Activated CD4-positive, alpha-beta T cell treated with anti-CD3 and anti-CD28 coated beads, Interleukin-2, amount 10 ng/mL, durations not matched to agents 24 days and 14 days (primary cell): ENCODE measurements at regions of chr11 and their contacts with region 1.

Region 1: GRCh38 chr11:9015677-9016076 is 11.9 kb upstream of the NRIP3 start:
- DNase-seq: peak; percentile 88
- H3K4me3 Mint-ChIP-seq: no peak overlapping the region
- H3K27ac Mint-ChIP-seq: no peak overlapping the region
- H3K4me1 Mint-ChIP-seq: peaks cover 22% of the 10 kb centered on the region
- H3K27me3 Mint-ChIP-seq: peaks cover 17% of the 10 kb centered on the region

Region 2: GRCh38 chr11:9060700-9061111 is 45.0 kb after region 1 on chr11:
- intact Hi-C with region 1: loop called (anchors 5 kb)
- DNase-seq: peak; percentile 84
- H3K4me3 Mint-ChIP-seq: no peak overlapping the region
- H3K27ac Mint-ChIP-seq: peak overlapping the region; percentile 30
- H3K4me1 Mint-ChIP-seq: peaks cover 14% of the 10 kb centered on the region
- H3K27me3 Mint-ChIP-seq: peaks cover 17% of the 10 kb centered on the region

Region 3: GRCh38 chr11:9137293-9138132 is 121.8 kb after region 1 on chr11:
- intact Hi-C with region 1: loop called (anchors 1 kb)
- DNase-seq: peak; percentile 92
- H3K4me3 Mint-ChIP-seq: no peak overlapping the region
- H3K27ac Mint-ChIP-seq: peak overlapping the region; percentile 80
- H3K4me1 Mint-ChIP-seq: peaks cover 29% of the 10 kb centered on the region
- H3K27me3 Mint-ChIP-seq: no peaks in the 10 kb centered on the region

Region 4: DNA sequence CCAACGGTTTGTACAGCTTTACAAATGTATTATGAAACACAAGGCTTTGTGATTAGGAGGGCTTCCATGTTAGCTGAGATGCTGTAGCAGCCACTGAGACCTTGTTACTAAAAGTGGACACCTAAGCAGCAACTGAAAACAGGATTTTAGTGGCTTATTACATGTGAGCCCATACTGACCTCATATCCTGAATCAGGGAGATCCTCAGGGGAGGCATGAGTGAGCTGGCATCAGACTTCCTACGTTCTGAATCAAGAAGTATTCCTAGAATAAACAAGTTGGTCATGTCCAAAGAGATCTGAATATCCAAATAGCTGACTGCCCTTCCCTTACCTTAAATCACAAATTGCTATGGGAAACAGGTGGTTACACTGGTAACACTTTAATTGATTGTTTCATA is 134.8 kb after region 1 on chr11:
- intact Hi-C with region 1: no loop called
- DNase-seq: no peak
- H3K4me3 Mint-ChIP-seq: no peak overlapping the region
- H3K27ac Mint-ChIP-seq: no peak overlapping the region
- H3K4me1 Mint-ChIP-seq: peaks cover 9% of the 10 kb centered on the region
- H3K27me3 Mint-ChIP-seq: no peaks in the 10 kb centered on the region

Region 5: DNA sequence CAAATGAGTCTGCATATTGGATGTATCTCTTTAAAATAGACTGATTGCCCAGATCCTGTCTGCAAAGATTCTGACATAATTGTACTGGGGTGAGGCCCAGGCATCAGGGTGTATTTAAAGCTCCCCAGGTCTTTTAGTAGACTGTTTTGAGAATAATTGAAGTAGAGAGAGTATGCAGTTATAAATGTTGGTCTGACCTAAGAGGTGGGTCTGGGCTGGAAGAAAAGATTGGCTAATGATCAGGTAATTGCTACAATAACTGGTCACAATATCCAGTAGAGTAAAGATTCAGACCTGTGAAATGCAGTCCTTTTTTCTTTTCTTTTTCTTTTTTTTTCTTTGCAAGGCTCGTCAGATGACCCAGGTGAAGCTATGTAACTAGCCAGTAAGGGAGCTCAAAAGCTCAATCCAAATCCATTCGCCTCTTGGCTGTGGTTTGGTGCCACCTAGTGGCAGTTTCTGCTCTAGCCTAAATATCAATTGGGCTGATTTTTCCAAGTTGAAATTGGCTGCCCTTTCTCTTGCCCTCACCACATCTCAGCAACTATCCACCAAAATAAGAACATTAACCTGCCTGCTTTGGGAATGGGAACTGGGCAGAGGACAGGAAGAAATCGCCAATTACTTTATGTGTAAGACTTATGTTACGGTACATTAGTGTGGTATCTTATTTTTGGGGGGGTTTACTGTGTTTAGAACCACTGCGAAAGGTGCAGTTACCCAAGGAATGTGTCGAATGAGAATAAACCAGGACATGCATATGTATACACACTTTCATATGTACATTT is 491.0 kb after region 1 on chr11:
- intact Hi-C with region 1: loop called (anchors 2 kb)
- DNase-seq: peak; percentile 93
- H3K4me3 Mint-ChIP-seq: no peak overlapping the region
- H3K27ac Mint-ChIP-seq: no peak overlapping the region
- H3K4me1 Mint-ChIP-seq: peaks cover 13% of the 10 kb centered on the region
- H3K27me3 Mint-ChIP-seq: no peaks in the 10 kb centered on the region